ENCODE measurements at regions of chr4 and their contacts with region 1.

Region 1: DNA sequence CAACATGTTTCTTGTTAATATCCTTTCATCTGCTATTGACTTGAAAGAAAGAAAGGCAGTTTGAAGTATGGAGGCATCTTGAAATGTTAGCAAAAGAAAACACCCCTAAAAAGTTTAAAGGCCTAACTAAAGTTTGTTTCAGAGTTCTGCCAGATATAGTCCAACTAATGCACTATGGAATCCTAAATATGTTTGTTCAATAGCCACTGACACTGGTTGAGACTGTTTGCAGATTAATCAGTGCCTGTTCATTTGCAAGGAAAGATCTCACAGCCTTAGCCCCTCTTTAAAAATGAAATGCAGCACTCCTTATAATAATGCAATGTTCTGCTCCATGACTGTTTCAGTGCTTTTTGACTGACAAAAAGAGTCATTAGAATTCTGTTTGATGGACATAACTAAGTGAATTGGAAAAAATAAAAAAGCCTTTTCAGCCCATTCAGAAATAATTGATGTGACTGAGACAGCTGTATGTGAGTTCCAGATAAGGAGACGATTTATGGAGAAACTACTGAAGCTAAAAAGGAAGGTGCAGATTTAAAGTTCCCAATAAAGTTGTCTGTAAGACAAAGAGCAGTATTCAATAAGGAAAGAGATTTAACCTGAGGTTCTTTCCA is 192.0 kb downstream of the PCDH7 start:
- DNase-seq: no peak
- ATAC-seq: no peak
- H3K4me3 Mint-ChIP-seq: no peak overlapping the region
- H3K27ac Mint-ChIP-seq: no peak overlapping the region
- H3K4me1 Mint-ChIP-seq: peaks cover 18% of the 10 kb centered on the region
- H3K27me3 Mint-ChIP-seq: peaks cover 9% of the 10 kb centered on the region
- CTCF ChIP-seq: no peak

Region 2: GRCh38 chr4:30630431-30630830 is 281.8 kb before region 1 on chr4:
- CTCF ChIA-PET with region 1: no interaction called
- POLR2A ChIA-PET with region 1: interaction called, 10 read pairs
- DNase-seq: no peak
- ATAC-seq: no peak
- H3K4me3 Mint-ChIP-seq: no peak overlapping the region
- H3K27ac Mint-ChIP-seq: no peak overlapping the region
- H3K4me1 Mint-ChIP-seq: peaks cover 5% of the 10 kb centered on the region
- H3K27me3 Mint-ChIP-seq: no peaks in the 10 kb centered on the region; the same call in 1 of the 2 replicates
- CTCF ChIP-seq: no peak

Region 3: DNA sequence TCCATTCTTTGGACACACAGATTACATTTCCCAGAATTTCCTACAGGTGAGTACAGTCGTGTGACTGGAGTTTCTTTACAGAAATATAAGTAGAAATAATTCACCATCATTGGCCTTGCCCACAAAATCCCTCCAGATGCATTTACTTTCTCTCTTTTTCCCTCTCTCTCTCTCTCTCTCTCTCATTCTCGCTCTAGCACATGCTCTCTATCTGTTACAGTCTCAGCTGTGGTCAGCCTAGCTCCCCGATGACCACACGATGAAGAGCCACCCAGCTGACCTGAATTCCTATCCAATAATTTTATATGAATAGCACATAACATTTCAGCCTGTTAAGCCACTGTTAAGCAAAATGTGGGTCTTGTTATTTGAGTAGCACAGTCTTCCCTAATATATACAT is 315.9 kb after region 1 on chr4:
- CTCF ChIA-PET with region 1: no interaction called
- POLR2A ChIA-PET with region 1: no interaction called
- DNase-seq: no peak
- ATAC-seq: no peak
- H3K4me3 Mint-ChIP-seq: no peak overlapping the region
- H3K27ac Mint-ChIP-seq: no peak overlapping the region
- H3K4me1 Mint-ChIP-seq: no peaks in the 10 kb centered on the region
- H3K27me3 Mint-ChIP-seq: no peaks in the 10 kb centered on the region
- CTCF ChIP-seq: no peak

Measured in WTC11 (cell line).